Prostate gland (tissue), 2 donors: ENCODE measurements at regions of chr2 and their contacts with region 1.

Region 1: DNA sequence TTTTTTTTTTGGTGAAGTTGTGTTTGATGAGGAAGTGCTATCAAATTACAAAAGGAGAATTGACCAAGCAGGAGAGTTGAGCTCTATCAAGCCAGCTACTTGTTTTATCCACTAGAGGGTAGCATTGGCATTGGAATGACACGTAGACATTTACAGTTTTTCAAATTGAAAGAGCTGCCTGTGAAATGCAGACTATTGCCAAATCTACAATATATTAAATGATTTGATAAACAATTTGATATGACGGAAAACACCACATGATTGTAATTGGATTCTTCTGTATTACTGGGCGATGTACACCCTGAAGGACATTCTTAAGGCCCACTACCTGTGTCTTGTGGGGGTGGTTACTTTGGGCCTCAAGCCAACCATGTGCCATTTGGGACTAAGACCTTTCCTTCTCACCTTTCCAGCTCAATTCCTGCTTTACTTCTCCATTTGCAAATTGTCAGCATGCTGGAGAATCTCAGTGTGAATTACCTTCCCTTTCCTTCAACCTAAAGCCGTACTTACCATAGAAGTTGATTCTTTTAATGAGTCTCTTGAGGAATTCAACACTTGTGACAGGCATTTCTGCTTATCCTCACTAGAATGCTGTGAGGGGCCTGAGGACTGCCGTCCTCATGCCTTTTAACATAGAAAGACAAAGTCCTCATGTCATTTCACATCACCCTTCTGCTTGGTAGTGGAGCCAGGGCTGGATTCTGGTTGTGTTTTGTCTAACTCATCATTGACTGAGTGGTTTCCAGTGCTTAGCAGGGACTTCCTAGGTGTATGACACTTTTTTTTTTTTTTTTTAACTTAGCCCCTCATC is 134.8 kb upstream of the THUMPD2 start:
- DNase-seq: peak; percentile 8
- H3K4me3 ChIP-seq: no peak overlapping the region
- H3K27ac ChIP-seq: no peak overlapping the region
- H3K4me1 ChIP-seq: no peaks in the 10 kb centered on the region
- H3K27me3 ChIP-seq: no peaks in the 10 kb centered on the region
- CTCF ChIP-seq: peak; percentile 43 to 77 (median 72)
- POLR2A ChIP-seq: no peak

Region 2: GRCh38 chr2:39805936-39806608 is 107.8 kb before region 1 on chr2:
- intact Hi-C with region 1: no loop called
- DNase-seq: no peak
- H3K4me3 ChIP-seq: no peak overlapping the region
- H3K27ac ChIP-seq: no peak overlapping the region
- H3K4me1 ChIP-seq: no peaks in the 10 kb centered on the region
- H3K27me3 ChIP-seq: no peaks in the 10 kb centered on the region
- CTCF ChIP-seq: no peak
- POLR2A ChIP-seq: no peak

Region 3: DNA sequence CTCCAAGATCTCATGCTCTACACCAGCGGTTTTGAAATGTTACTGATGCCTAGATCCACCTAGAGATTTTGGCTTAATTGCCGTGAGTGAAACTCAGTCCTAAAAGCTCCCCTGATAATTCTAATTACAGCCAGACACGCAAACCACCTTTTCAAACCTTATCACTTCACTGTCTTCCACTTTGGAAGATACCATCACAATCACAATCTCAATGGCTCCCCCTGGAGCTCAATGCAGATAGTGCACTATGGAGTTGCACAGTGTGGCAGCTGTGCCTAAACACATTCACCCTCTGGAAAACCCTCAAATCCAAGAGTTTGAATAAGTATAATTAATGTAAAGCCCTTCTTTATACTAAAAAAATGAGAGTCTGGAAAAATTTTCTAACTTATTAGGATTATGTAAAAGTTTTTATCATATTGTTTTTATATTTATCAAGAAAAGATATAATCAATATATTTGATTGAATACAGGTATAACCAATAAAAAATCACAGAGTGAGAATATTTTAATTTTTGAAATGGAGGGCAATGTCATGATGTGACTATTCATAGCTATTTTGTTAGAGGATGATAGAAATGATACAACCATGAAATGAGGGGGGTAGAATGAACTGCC is 640.9 kb after region 1 on chr2:
- intact Hi-C with region 1: loop called (anchors 10 kb)
- DNase-seq: peak; percentile 27
- H3K4me3 ChIP-seq: no peak overlapping the region
- H3K27ac ChIP-seq: no peak overlapping the region
- H3K4me1 ChIP-seq: no peaks in the 10 kb centered on the region
- H3K27me3 ChIP-seq: no peaks in the 10 kb centered on the region
- CTCF ChIP-seq: peak in 3 of 4 experiments; percentile 59 to 66 (median 64)
- POLR2A ChIP-seq: no peak

Region 4: GRCh38 chr2:40760071-40760666 is 846.3 kb after region 1 on chr2:
- intact Hi-C with region 1: loop called (anchors 10 kb)
- DNase-seq: peak; percentile 4
- H3K4me3 ChIP-seq: no peak overlapping the region
- H3K27ac ChIP-seq: no peak overlapping the region
- H3K4me1 ChIP-seq: no peaks in the 10 kb centered on the region
- H3K27me3 ChIP-seq: no peaks in the 10 kb centered on the region
- CTCF ChIP-seq: peak in 3 of 4 experiments; percentile 36 to 51 (median 45)
- POLR2A ChIP-seq: no peak

Region 5: GRCh38 chr2:41698678-41699422 is 1785.0 kb after region 1 on chr2:
- intact Hi-C with region 1: loop called (anchors 2 kb)
- DNase-seq: peak; percentile 16
- H3K4me3 ChIP-seq: peak overlapping the region in 1 of 2 donors; percentile 9
- H3K27ac ChIP-seq: no peak overlapping the region
- H3K4me1 ChIP-seq: no peaks in the 10 kb centered on the region
- H3K27me3 ChIP-seq: no peaks in the 10 kb centered on the region
- CTCF ChIP-seq: peak; percentile 48 to 81 (median 62)
- POLR2A ChIP-seq: no peak

Region 6: DNA sequence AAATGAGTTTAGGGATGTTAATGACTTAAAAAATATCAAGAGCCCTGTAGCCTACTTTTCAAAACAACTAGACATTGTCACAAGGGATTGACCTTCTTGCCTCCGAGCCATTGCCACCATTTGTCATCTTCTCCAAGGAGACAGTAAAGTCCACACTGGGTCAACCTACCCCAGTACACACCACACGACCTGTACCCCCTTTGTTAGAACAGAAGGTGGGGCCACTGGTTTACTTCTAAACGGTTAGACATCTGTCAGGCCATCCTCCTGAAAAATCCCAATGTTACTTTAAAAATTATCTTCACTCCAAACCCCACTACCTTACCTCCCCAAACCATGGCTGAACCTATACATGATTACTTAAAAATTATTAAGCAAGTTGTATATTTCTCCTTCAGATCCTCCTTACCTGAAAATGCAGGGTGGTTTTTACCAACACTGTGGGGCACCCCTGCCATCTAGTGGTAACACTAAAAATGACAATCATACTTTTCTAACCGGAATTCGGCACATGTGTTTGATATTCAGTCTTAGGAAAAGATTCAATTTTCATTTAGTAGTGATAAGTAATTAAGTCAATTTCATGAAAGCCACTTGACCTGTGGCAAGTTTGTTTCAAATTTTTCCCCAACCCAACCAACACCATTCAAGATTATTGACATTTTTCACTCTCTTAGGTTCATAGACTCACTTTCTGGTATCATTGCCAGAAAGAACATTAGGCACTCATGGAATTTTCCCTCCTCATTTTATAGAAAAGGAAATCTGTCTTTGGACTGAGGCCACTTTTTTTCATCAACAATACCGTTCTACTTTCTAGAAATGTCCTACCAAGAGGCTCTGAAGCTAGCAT is 1868.7 kb after region 1 on chr2:
- intact Hi-C with region 1: loop called (anchors 5 kb)
- DNase-seq: no peak
- H3K4me3 ChIP-seq: no peak overlapping the region
- H3K27ac ChIP-seq: no peak overlapping the region
- H3K4me1 ChIP-seq: no peaks in the 10 kb centered on the region
- H3K27me3 ChIP-seq: no peaks in the 10 kb centered on the region
- CTCF ChIP-seq: peak; percentile 47 to 81 (median 74)
- POLR2A ChIP-seq: no peak